ENCODE measurements at regions of chr1 and their contacts with region 1.

Region 1: DNA sequence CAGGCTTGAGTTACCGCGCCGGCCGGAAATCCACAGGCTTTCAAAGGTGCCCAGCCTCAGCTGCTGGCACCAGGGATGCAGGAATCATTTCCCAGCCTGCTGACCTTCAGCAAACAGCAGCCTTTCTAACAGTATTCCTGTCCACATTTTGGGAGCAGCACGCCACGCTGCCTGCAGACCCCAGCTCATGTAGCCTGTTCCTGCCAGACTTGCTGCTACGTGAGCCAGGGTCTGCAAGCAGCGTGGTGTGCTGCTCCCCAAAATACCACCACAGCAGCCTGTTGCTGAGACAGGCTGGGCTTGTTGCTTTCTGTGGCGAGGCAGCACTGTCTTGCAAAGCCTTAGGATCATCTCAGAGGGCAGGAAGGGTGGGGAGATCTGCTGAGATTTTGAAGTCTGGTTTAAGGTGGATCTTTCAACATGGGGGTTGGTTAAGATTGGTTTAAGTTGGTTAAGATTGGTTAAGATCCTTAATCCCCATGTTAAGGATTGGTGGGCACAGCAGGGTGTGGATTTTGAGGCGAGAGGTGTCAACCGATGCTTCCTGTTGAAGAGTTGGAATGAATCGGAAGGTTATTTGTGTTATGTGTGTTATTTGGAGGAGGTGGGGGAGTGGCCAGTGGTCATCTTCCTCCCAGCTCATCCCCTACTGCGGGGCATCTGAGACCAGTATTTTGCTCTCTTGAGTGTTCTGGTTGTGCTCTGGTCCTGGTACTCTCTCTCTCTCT is 12.9 kb downstream of the FAAH start:
- DNase-seq: no peak

Region 2: GRCh38 chr1:46431691-46432090 is 24.6 kb after region 1 on chr1:
- CTCF ChIA-PET with region 1: interaction called, 10 read pairs
- POLR2A ChIA-PET with region 1: no interaction called
- DNase-seq: no peak

Region 3: DNA sequence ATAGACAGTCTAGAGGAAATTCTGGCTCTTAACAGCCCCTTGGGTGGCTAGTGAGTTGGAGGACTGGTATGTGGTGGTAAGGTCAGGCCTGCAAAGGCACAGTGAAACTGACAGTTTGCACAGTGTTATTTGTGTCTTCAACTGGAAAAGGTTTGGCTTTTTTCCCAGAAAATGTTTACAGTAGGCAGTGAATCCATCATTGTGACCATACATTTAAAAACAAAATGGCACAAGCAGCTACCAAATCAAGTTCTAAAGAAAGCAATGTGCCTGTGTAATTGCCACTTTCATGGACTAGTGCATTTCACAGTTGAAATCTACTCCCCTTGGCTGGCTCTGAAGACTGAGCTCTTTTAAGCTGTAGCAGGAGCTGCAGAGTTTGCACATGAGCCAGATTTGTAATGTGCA is 236.3 kb after region 1 on chr1:
- CTCF ChIA-PET with region 1: no interaction called
- POLR2A ChIA-PET with region 1: no interaction called
- DNase-seq: no peak